Activated CD4-positive, alpha-beta memory T cell treated with anti-CD3 and anti-CD28 coated beads for 36 hours (primary cell): ENCODE measurements at regions of chr17 and their contacts with region 1.

Region 1: DNA sequence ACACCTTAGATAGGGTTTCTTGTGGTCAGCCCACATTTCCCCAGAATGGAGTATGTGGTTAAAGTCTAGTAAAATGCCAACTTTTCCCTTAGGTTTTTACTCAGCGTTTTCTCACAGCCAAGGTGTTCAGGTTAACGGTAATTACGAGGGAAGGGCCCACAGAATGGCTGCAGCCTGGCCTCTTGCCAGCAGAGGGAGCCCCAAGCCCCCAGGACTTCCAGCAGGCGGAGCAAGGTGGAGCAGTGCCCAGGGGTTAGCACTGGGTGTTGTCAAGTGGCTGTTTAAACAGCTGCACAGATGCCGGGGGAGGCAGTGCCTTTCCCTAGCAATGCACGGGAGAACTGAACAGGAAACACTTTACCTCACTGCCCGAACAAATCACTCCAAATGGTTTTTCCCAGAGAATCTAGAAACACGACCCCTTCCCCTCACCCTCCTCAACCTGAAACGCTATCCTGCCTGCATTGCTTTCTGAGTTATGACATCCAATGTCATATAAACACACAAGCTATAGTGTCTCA is 6.6 kb downstream of the PHB1 start:
- DNase-seq: peak; percentile 91
- H3K4me3 Mint-ChIP-seq: no peak overlapping the region
- H3K27ac Mint-ChIP-seq: peak overlapping the region; percentile 40
- H3K4me1 Mint-ChIP-seq: peaks cover 13% of the 10 kb centered on the region
- H3K27me3 Mint-ChIP-seq: no peaks in the 10 kb centered on the region

Region 2: DNA sequence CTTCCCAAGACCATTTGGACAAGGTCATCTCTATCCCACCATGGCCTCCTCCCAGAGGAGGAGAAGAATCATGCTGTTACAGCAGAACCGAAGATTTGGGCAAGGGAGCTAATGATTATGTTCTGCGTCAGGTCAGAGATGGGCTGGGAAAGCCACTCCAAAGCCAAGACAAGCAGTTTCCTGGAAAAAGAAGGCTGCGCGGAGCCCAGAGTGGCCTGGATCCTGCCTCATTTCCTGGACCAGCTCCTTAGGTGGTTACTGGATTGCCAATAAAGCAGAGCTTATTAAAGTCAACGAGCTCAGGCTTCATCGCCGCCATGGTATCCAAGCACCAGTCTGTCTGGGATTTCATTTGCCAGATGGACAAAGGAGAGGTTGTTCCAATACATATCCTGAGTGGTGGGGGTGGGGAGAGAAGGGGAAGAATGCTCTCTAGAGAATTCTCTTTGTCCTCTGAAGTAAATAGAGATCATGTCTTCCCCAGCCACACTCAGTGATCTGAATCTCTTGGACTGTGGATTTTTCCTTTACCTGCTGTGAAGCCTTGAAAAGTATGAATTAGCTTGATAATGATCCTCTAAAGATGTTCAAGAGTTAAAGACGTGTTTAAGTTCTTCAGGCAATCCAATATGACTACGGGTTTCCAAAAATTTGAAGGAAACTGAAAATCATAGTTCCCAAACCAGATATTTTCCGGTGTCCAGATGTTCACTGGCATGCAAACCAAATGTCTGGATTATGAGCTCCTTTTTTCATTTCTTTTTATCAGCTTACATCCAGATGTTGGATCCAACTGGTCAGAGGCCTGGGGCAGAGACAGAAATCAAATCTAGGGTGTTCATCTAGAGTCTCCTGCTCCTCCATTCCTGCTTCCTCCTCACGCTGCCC is 703.4 kb before region 1 on chr17:
- CTCF ChIA-PET with region 1: no interaction called
- POLR2A ChIA-PET with region 1: no interaction called
- intact Hi-C with region 1: no loop called
- DNase-seq: no peak
- H3K4me3 Mint-ChIP-seq: no peak overlapping the region
- H3K27ac Mint-ChIP-seq: no peak overlapping the region
- H3K4me1 Mint-ChIP-seq: no peaks in the 10 kb centered on the region
- H3K27me3 Mint-ChIP-seq: peaks cover 48% of the 10 kb centered on the region

Region 3: DNA sequence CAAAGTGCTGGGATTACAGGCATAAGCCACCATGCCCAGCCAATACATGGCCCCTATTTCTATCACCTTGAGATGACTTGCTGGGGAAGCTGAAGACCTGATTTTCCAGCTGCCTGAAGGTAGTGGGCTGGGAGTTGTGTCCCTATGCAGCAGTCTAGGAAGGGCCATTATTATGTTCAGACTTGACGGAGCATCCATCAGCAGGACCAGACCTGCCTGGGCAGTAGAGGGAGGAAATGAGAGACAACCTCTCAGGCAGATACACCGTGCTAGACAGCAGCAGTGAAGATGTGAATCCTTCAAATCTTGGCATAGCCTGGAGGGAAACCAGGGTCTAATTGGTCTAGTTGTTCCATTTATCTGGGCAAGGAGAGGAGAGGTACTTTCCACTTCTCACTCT is 141.8 kb before region 1 on chr17:
- CTCF ChIA-PET with region 1: no interaction called
- POLR2A ChIA-PET with region 1: no interaction called
- intact Hi-C with region 1: no loop called
- DNase-seq: no peak
- H3K4me3 Mint-ChIP-seq: no peak overlapping the region
- H3K27ac Mint-ChIP-seq: no peak overlapping the region
- H3K4me1 Mint-ChIP-seq: peaks cover under 1% of the 10 kb centered on the region
- H3K27me3 Mint-ChIP-seq: peaks cover 1% of the 10 kb centered on the region

Region 4: GRCh38 chr17:49447628-49448302 is 39.7 kb after region 1 on chr17:
- CTCF ChIA-PET with region 1: no interaction called
- POLR2A ChIA-PET with region 1: no interaction called
- intact Hi-C with region 1: no loop called
- DNase-seq: no peak
- H3K4me3 Mint-ChIP-seq: no peak overlapping the region
- H3K27ac Mint-ChIP-seq: no peak overlapping the region
- H3K4me1 Mint-ChIP-seq: peaks cover 3% of the 10 kb centered on the region
- H3K27me3 Mint-ChIP-seq: peaks cover 4% of the 10 kb centered on the region

Region 5: GRCh38 chr17:49459401-49459984 is 51.5 kb after region 1 on chr17:
- CTCF ChIA-PET with region 1: no interaction called
- POLR2A ChIA-PET with region 1: no interaction called
- intact Hi-C with region 1: no loop called
- DNase-seq: no peak
- H3K4me3 Mint-ChIP-seq: no peak overlapping the region
- H3K27ac Mint-ChIP-seq: no peak overlapping the region
- H3K4me1 Mint-ChIP-seq: no peaks in the 10 kb centered on the region
- H3K27me3 Mint-ChIP-seq: peaks cover 47% of the 10 kb centered on the region

Region 6: DNA sequence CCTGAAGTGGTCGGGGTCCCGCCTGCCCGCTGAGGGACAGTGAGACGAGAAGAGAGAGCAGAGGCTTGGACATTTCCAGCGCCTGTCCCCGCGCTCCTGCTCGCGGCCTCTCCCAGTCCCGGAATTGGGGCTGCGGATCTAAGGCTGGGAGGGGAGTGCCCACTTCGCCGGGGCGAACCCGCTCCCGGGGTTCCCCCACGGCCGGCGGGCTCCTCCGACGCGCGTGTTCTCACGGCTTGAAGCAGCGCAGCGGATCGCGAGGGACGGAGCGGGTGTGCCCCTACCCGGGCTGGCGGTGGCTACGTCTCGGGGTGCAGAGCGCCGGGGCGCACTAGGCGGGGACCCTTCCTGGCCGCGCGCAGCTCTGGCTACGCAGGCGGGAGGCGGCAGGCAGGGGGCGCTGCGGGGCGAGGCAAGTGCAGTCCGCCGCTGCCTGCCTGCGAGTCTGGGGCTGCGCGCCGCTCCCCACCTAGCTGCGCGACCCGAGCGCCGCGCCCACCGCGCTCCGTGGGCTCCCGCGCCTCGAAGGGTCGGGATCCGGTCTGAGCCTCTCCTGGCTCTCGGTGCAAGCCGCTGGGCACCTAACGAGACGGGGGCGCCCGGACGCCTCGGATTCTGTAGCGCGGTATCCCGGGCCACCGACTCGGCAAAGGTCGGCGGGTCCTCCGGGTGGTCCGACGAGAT is 88.3 kb after region 1 on chr17:
- CTCF ChIA-PET with region 1: interaction called, 10 read pairs
- POLR2A ChIA-PET with region 1: no interaction called
- intact Hi-C with region 1: no loop called
- DNase-seq: peak; percentile 84
- H3K4me3 Mint-ChIP-seq: peak overlapping the region; percentile 65
- H3K27ac Mint-ChIP-seq: no peak overlapping the region
- H3K4me1 Mint-ChIP-seq: peaks cover 22% of the 10 kb centered on the region
- H3K27me3 Mint-ChIP-seq: peaks cover 47% of the 10 kb centered on the region

Region 7: GRCh38 chr17:49548506-49549310 is 140.7 kb after region 1 on chr17:
- CTCF ChIA-PET with region 1: interaction called, 167 read pairs
- POLR2A ChIA-PET with region 1: no interaction called
- intact Hi-C with region 1: loop called (anchors 2 kb)
- DNase-seq: peak; percentile 37
- H3K4me3 Mint-ChIP-seq: no peak overlapping the region
- H3K27ac Mint-ChIP-seq: no peak overlapping the region
- H3K4me1 Mint-ChIP-seq: no peaks in the 10 kb centered on the region
- H3K27me3 Mint-ChIP-seq: peaks cover 1% of the 10 kb centered on the region